ENCODE measurements at regions of chr9 and their contacts with region 1.

Region 1: GRCh38 chr9:36102742-36103495 is 33.6 kb upstream of the GLIPR2 start:
- DNase-seq: peak; percentile 92
- ATAC-seq: peak; percentile 99
- H3K4me3 Mint-ChIP-seq: no peak overlapping the region
- H3K27ac Mint-ChIP-seq: no peak overlapping the region
- H3K4me1 Mint-ChIP-seq: peaks cover 8% of the 10 kb centered on the region
- H3K27me3 Mint-ChIP-seq: no peaks in the 10 kb centered on the region
- CTCF ChIP-seq: peak; percentile 92

Region 2: DNA sequence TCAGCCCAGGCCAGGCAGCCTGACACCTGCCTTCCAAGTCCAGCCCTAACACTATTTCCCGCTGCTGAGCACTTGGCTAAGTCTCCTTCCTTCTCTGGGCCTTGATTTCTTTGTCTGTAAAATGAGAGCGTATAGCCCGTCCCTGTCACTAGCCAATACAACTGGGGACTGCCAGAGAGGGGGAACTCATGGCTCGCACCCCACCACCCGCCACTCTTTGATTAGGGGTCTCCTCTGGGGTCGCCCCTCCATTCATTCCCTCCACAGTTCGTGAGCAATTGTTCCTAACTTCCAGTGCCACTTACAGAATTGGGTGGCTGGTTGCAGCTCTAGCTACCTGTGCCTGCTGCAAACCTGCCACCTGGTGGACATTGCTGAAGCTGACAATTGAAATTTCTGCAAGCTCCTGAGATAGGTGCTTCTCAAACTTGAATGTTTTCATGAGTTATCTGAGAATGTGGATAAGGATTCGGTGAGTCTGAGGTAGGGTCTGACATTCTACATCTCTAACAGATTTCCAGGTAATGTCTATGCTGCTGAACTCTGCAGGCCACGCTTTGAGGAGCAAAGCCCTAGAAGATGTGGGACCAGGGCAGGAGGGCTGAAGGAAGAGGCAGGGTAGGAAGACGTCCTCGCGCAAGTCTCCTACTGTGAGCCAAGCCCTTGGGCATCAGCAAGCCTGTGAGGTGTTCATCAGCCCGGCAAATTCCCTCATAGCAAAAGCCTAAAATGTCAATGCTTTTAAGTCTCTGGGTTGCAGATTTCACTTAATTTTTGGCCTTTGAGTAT is 79.5 kb before region 1 on chr9:
- CTCF ChIA-PET with region 1: interaction called, 16 read pairs
- POLR2A ChIA-PET with region 1: no interaction called
- intact Hi-C with region 1: no loop called
- DNase-seq: peak; percentile 78
- ATAC-seq: peak; percentile 75
- H3K4me3 Mint-ChIP-seq: no peak overlapping the region
- H3K27ac Mint-ChIP-seq: no peak overlapping the region
- H3K4me1 Mint-ChIP-seq: no peaks in the 10 kb centered on the region
- H3K27me3 Mint-ChIP-seq: no peaks in the 10 kb centered on the region
- CTCF ChIP-seq: peak; percentile 89

Region 3: GRCh38 chr9:36092509-36093215 is 10.3 kb before region 1 on chr9:
- CTCF ChIA-PET with region 1: interaction called, 19 read pairs
- POLR2A ChIA-PET with region 1: no interaction called
- intact Hi-C with region 1: no loop called
- DNase-seq: peak; percentile 69
- ATAC-seq: peak; percentile 98
- H3K4me3 Mint-ChIP-seq: no peak overlapping the region
- H3K27ac Mint-ChIP-seq: peak overlapping the region; percentile 82
- H3K4me1 Mint-ChIP-seq: peaks cover 19% of the 10 kb centered on the region
- H3K27me3 Mint-ChIP-seq: no peaks in the 10 kb centered on the region
- CTCF ChIP-seq: no peak

Region 4: DNA sequence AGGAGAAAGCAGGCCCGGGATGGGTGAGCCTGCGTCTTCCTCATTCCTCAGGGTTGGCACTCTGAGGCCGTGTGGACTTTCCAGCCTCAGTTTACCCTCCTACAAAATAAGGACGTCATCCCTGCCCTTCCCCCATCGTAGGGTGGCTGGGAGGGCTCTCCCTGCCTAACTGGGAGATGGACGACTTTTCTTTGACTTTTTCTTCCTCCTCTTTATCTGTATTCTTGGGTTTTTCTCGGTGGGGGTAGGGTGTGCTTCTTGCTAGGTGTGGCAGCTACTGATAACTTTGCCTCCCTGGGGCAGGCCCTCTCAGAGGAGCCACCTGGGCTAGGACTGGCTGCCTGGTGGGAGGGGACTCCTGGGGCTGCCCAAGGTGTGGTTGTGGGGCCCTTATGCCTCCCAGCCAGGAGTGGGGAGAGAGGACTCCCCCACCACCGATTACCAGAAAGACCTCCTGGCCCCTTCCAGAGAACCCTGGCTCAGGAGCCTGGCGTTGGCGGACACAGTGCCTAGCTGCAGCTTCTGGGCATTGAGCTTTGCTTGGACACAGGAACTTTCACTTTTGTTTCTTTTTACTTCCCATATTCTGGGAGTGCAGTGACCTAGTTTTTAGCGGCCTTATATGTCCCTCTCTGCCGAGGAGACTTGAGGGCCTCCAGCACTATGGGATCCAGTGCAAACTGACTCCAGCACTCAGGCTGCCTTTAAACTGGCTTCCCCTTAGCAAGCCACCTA is 39.8 kb after region 1 on chr9:
- CTCF ChIA-PET with region 1: interaction called, 20 read pairs
- POLR2A ChIA-PET with region 1: no interaction called
- intact Hi-C with region 1: no loop called
- DNase-seq: no peak
- ATAC-seq: peak; percentile 19
- H3K4me3 Mint-ChIP-seq: peak overlapping the region; percentile 68
- H3K27ac Mint-ChIP-seq: peak overlapping the region; percentile 93
- H3K4me1 Mint-ChIP-seq: peaks cover 90% of the 10 kb centered on the region
- H3K27me3 Mint-ChIP-seq: no peaks in the 10 kb centered on the region
- CTCF ChIP-seq: no peak

Region 5: GRCh38 chr9:36166101-36166927 is 63.4 kb after region 1 on chr9:
- CTCF ChIA-PET with region 1: interaction called, 330 read pairs
- POLR2A ChIA-PET with region 1: interaction called, 4 read pairs
- intact Hi-C with region 1: loop called (anchors 1 kb)
- DNase-seq: peak; percentile 85
- ATAC-seq: peak; percentile 97
- H3K4me3 Mint-ChIP-seq: peak overlapping the region; percentile 70
- H3K27ac Mint-ChIP-seq: no peak overlapping the region
- H3K4me1 Mint-ChIP-seq: peaks cover 3% of the 10 kb centered on the region
- H3K27me3 Mint-ChIP-seq: no peaks in the 10 kb centered on the region
- CTCF ChIP-seq: peak; percentile 95

Measured in activated CD8-positive, alpha-beta T cell treated with anti-CD3 and anti-CD28 coated beads for 36 hours (primary cell).